ENCODE measurements at regions of chr20 and their contacts with region 1.

Region 1: DNA sequence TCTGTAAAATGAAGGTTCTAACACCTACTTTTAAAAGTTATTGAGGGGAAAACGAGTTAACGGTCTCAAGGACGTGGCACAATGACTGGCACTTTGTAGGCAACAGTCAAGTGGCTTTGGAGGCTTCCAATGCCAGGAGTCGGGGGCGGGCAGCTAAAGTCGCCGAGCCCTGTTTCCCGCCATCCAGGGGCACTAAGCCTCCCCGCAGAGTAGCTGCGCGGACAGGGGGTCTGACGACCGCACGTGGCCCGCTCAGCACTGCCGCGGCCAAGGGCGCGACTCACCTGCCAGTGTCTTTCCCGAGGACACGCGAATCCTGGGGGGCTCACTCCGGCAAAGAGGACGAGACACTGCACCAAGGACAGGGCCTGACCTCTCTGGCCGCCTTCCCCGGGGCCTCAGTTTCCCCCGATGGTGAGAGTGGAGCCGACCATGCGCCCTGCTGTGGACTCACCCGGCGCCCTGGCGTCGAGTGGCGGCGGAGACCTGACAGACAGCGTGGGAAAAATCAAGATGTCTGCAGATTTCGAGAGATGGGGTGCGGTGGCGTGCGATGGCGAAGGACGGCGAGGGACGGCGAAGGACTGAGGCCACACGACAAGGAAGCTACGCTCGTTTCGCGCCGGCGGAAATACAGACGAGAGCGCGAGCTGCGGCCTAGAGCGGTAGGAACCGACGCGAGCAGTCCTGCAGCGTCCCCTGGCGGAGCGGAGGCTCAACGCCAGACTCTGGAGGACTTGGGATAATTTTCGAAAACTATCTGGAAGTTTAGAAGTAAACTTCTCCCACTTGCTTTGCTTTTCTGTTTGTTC is at the start of gene SNHG17:
- DNase-seq: peak; percentile 80 to 97 (median 86)
- ATAC-seq: peak; percentile 85
- H3K4me3 ChIP-seq: peak within 1 kb of the TSS; percentile 85
- H3K4me3 Mint-ChIP-seq: peak within 1 kb of the TSS; percentile 98
- H3K27ac ChIP-seq: peak within 1 kb of the TSS; percentile 78 to 88
- H3K27ac Mint-ChIP-seq: peak within 1 kb of the TSS; percentile 93
- H3K4me1 ChIP-seq: peaks cover 30% of the 10 kb centered on the region
- H3K4me1 Mint-ChIP-seq: peaks cover 52% of the 10 kb centered on the region
- H3K27me3 ChIP-seq: no peaks in the 10 kb centered on the region
- H3K27me3 Mint-ChIP-seq: peaks cover 10% of the 10 kb centered on the region
- CTCF ChIP-seq: peak; percentile 100
- total RNA-seq, gene SNHG17: 94.1 to 99.3 TPM

Region 2: DNA sequence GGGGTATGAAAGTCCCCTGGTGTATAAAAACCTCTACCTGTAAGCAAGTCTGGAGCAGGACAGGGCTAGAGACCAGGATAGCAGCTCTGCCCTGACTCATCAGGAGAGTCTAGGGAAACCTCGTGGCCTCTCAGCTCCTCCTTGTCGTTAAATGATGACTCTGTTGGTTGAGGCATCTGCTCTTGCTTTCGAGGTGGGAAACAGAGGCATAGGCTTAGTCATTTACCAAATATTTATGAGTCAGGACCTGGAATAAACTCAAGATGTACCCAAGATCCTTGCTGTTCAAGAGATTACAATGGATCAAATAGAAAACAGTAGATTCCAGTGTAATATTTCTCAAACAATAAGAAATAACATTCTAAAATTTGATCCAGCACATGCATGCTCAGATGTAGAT is 1139.9 kb before region 1 on chr20:
- CTCF ChIA-PET with region 1: no interaction called
- POLR2A ChIA-PET with region 1: no interaction called
- intact Hi-C with region 1: loop called in 1 of 2 experiments (anchors 10 kb)
- DNase-seq: peak in 2 of 14 experiments; percentile 34 to 54
- ATAC-seq: no peak
- H3K4me3 ChIP-seq: no peak overlapping the region
- H3K4me3 Mint-ChIP-seq: no peak overlapping the region
- H3K27ac ChIP-seq: no peak overlapping the region
- H3K27ac Mint-ChIP-seq: no peak overlapping the region
- H3K4me1 ChIP-seq: peaks cover 20% of the 10 kb centered on the region
- H3K4me1 Mint-ChIP-seq: peaks cover 61% of the 10 kb centered on the region
- H3K27me3 ChIP-seq: no peaks in the 10 kb centered on the region
- H3K27me3 Mint-ChIP-seq: no peaks in the 10 kb centered on the region
- CTCF ChIP-seq: no peak

Region 3: DNA sequence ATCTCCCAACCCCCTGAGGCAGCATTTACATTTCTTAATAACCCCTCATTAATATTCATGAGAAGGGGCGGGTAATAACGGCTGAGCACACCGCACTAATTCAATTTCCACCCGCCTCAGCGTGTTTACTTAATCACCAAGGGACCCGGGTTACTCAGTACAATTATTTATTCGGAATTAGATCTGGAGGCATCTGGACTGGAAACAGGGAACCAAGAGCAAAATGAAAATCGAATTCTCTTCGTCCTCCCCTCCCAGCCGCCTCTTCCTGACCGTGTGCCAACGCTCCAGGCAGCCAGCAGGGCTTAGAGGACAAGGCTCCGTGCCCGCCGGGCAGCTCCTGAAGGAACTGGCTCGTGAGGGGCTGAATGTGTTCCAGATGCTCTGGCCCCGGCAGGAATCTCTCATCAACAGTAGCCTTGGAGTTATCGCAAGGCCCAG is 764.6 kb before region 1 on chr20:
- CTCF ChIA-PET with region 1: no interaction called
- POLR2A ChIA-PET with region 1: no interaction called
- intact Hi-C with region 1: no loop called
- DNase-seq: no peak
- ATAC-seq: no peak
- H3K4me3 ChIP-seq: no peak overlapping the region
- H3K4me3 Mint-ChIP-seq: no peak overlapping the region
- H3K27ac ChIP-seq: no peak overlapping the region
- H3K27ac Mint-ChIP-seq: no peak overlapping the region
- H3K4me1 ChIP-seq: no peaks in the 10 kb centered on the region
- H3K4me1 Mint-ChIP-seq: no peaks in the 10 kb centered on the region
- H3K27me3 ChIP-seq: peaks cover 18 to 44% of the 10 kb centered on the region in 2 experiments
- H3K27me3 Mint-ChIP-seq: peaks cover 59% of the 10 kb centered on the region
- CTCF ChIP-seq: no peak

Region 4: GRCh38 chr20:38033310-38034107 is 401.4 kb before region 1 on chr20 and contains the starts of genes RPRD1B and TTI1:
- CTCF ChIA-PET with region 1: no interaction called
- POLR2A ChIA-PET with region 1: interaction called, 8 read pairs
- intact Hi-C with region 1: loop called in 1 of 2 experiments (anchors 2 kb)
- DNase-seq: peak; percentile 74 to 94 (median 84)
- ATAC-seq: peak; percentile 84
- H3K4me3 ChIP-seq: peak within 1 kb of the TSS; percentile 79
- H3K4me3 Mint-ChIP-seq: peak within 1 kb of the TSS; percentile 99
- H3K27ac ChIP-seq: peak within 1 kb of the TSS; percentile 92 to 98
- H3K27ac Mint-ChIP-seq: peak within 1 kb of the TSS; percentile 100
- H3K4me1 ChIP-seq: peaks cover 38% of the 10 kb centered on the region
- H3K4me1 Mint-ChIP-seq: peaks cover 85% of the 10 kb centered on the region
- H3K27me3 ChIP-seq: no peaks in the 10 kb centered on the region
- H3K27me3 Mint-ChIP-seq: no peaks in the 10 kb centered on the region
- CTCF ChIP-seq: no peak
- total RNA-seq, gene RPRD1B: 54.8 to 55.7 TPM
- total RNA-seq, gene TTI1: 10.6 to 11.4 TPM

Region 5: GRCh38 chr20:38355151-38356012 is 79.6 kb before region 1 on chr20:
- CTCF ChIA-PET with region 1: no interaction called
- POLR2A ChIA-PET with region 1: no interaction called
- intact Hi-C with region 1: no loop called
- DNase-seq: no peak
- ATAC-seq: no peak
- H3K4me3 ChIP-seq: no peak overlapping the region
- H3K4me3 Mint-ChIP-seq: no peak overlapping the region
- H3K27ac ChIP-seq: no peak overlapping the region
- H3K27ac Mint-ChIP-seq: no peak overlapping the region
- H3K4me1 ChIP-seq: no peaks in the 10 kb centered on the region
- H3K4me1 Mint-ChIP-seq: no peaks in the 10 kb centered on the region
- H3K27me3 ChIP-seq: no peaks in the 10 kb centered on the region
- H3K27me3 Mint-ChIP-seq: no peaks in the 10 kb centered on the region
- CTCF ChIP-seq: no peak

Region 6: GRCh38 chr20:38395165-38395564 is 39.8 kb before region 1 on chr20:
- CTCF ChIA-PET with region 1: no interaction called
- POLR2A ChIA-PET with region 1: no interaction called
- intact Hi-C with region 1: no loop called
- DNase-seq: no peak
- ATAC-seq: no peak
- H3K4me3 ChIP-seq: no peak overlapping the region
- H3K4me3 Mint-ChIP-seq: no peak overlapping the region
- H3K27ac ChIP-seq: no peak overlapping the region
- H3K27ac Mint-ChIP-seq: no peak overlapping the region
- H3K4me1 ChIP-seq: no peaks in the 10 kb centered on the region
- H3K4me1 Mint-ChIP-seq: no peaks in the 10 kb centered on the region
- H3K27me3 ChIP-seq: no peaks in the 10 kb centered on the region
- H3K27me3 Mint-ChIP-seq: no peaks in the 10 kb centered on the region
- CTCF ChIP-seq: no peak

Region 7: DNA sequence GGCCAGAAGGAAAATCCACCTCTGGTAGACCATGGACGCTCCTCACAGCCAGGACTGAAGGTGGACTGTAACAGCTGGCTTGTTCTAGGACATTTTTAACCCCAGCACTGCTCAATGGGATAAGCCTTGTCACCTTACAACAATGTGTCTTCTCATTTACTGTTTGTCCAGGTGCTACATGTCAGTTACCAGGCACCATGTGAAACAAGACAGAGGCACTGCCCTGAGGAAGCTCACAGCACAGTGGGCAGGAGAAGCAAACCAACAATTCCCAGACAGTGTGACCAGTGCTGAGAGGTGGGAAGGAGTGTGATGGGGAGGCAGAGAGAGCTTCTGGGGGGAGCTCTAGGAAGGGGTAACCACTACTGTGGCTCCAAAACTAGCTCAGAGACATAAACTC is 10.5 kb before region 1 on chr20:
- CTCF ChIA-PET with region 1: interaction called, 7 read pairs
- POLR2A ChIA-PET with region 1: interaction called, 12 read pairs
- intact Hi-C with region 1: no loop called
- DNase-seq: no peak
- ATAC-seq: no peak
- H3K4me3 ChIP-seq: no peak overlapping the region
- H3K4me3 Mint-ChIP-seq: no peak overlapping the region
- H3K27ac ChIP-seq: no peak overlapping the region
- H3K27ac Mint-ChIP-seq: no peak overlapping the region
- H3K4me1 ChIP-seq: peaks cover 6% of the 10 kb centered on the region
- H3K4me1 Mint-ChIP-seq: peaks cover 36% of the 10 kb centered on the region
- H3K27me3 ChIP-seq: no peaks in the 10 kb centered on the region
- H3K27me3 Mint-ChIP-seq: no peaks in the 10 kb centered on the region
- CTCF ChIP-seq: no peak

Region 8: GRCh38 chr20:38446441-38447209 is 11.7 kb after region 1 on chr20:
- CTCF ChIA-PET with region 1: interaction called, 123 read pairs
- POLR2A ChIA-PET with region 1: interaction called, 149 read pairs
- intact Hi-C with region 1: loop called (anchors 1 kb)
- DNase-seq: peak; percentile 87 to 96 (median 91)
- ATAC-seq: peak; percentile 98
- H3K4me3 ChIP-seq: peak overlapping the region; percentile 89
- H3K4me3 Mint-ChIP-seq: peak overlapping the region; percentile 85
- H3K27ac ChIP-seq: peak overlapping the region; percentile 38 to 75
- H3K27ac Mint-ChIP-seq: peak overlapping the region; percentile 64
- H3K4me1 ChIP-seq: peaks cover 22% of the 10 kb centered on the region
- H3K4me1 Mint-ChIP-seq: peaks cover 25% of the 10 kb centered on the region
- H3K27me3 ChIP-seq: no peaks in the 10 kb centered on the region
- H3K27me3 Mint-ChIP-seq: peaks cover 2% of the 10 kb centered on the region
- CTCF ChIP-seq: peak; percentile 100

Region 9: GRCh38 chr20:38472513-38473372 is 37.8 kb after region 1 on chr20 and contains the start of gene RALGAPB:
- CTCF ChIA-PET with region 1: interaction called, 52 read pairs
- POLR2A ChIA-PET with region 1: interaction called, 56 read pairs
- intact Hi-C with region 1: loop called (anchors 1 kb)
- DNase-seq: peak; percentile 96 to 100 (median 98)
- ATAC-seq: peak; percentile 95
- H3K4me3 ChIP-seq: peak within 1 kb of the TSS; percentile 84
- H3K4me3 Mint-ChIP-seq: peak within 1 kb of the TSS; percentile 89
- H3K27ac ChIP-seq: peak within 1 kb of the TSS; percentile 37 to 81
- H3K27ac Mint-ChIP-seq: peak within 1 kb of the TSS; percentile 88
- H3K4me1 ChIP-seq: peaks cover 27% of the 10 kb centered on the region
- H3K4me1 Mint-ChIP-seq: peaks cover 58% of the 10 kb centered on the region
- H3K27me3 ChIP-seq: peaks cover 0 to 3% of the 10 kb centered on the region in 2 experiments
- H3K27me3 Mint-ChIP-seq: no peaks in the 10 kb centered on the region
- CTCF ChIP-seq: peak; percentile 61
- total RNA-seq, gene RALGAPB: 30.4 to 31.9 TPM

Region 10: GRCh38 chr20:38732981-38733380 is 298.0 kb after region 1 on chr20:
- CTCF ChIA-PET with region 1: no interaction called
- POLR2A ChIA-PET with region 1: no interaction called
- intact Hi-C with region 1: no loop called
- DNase-seq: no peak
- ATAC-seq: no peak
- H3K4me3 ChIP-seq: no peak overlapping the region
- H3K4me3 Mint-ChIP-seq: no peak overlapping the region
- H3K27ac ChIP-seq: no peak overlapping the region
- H3K27ac Mint-ChIP-seq: no peak overlapping the region
- H3K4me1 ChIP-seq: peaks cover 40% of the 10 kb centered on the region
- H3K4me1 Mint-ChIP-seq: peaks cover 35% of the 10 kb centered on the region
- H3K27me3 ChIP-seq: peaks cover 72% of the 10 kb centered on the region in 2 experiments
- H3K27me3 Mint-ChIP-seq: peaks cover 98% of the 10 kb centered on the region
- CTCF ChIP-seq: no peak

Region 11: DNA sequence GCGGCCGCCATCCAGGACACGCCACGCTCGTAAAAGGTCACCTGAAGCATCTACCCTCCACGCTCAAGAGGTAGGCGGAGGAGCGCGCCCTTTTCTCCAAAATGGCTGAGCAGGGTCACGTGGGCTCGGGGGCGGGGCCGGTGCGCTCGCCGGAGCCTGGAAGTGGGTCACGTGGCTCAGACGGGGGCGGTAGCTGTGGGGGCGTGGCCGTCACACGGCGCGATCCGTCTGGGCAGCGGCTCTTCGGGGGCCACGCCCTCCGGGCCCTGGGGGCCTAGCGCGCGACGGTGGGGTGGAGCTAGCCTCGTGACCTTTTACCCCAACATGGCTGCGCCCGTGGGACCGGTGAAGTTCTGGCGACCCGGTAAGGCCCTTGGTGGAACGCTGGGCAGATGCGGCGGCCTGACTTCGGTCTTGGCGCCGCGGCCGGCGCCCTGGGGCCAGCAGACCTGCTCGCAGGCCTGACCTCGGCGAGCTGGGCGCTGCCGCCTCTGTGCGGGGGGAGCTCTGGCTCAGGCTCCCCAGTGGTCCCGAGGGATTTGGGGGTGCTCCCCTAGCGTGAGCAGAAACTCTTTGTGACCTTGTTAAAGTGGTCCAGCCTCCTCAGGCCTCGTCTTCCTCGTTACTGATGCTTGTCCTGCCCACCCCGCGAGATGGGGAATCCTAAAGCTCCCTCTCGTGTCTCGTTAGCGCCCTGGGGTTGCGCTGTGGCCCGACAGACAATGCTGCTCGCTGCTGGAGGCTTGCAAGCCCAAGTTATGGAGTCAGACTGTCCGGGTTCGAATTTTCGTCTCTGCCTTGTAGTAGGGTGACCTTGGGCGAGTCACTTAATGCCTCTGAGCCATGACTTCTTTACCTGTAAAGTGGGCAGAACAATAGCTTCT is 527.3 kb after region 1 on chr20 and contains the start of gene DHX35:
- CTCF ChIA-PET with region 1: no interaction called
- POLR2A ChIA-PET with region 1: interaction called, 11 read pairs
- intact Hi-C with region 1: loop called in 1 of 2 experiments (anchors 5 kb)
- DNase-seq: peak; percentile 96 to 100 (median 98)
- ATAC-seq: peak; percentile 98
- H3K4me3 ChIP-seq: peak within 1 kb of the TSS; percentile 80
- H3K4me3 Mint-ChIP-seq: peak within 1 kb of the TSS; percentile 97
- H3K27ac ChIP-seq: peak within 1 kb of the TSS; percentile 73 to 77
- H3K27ac Mint-ChIP-seq: peak within 1 kb of the TSS; percentile 88
- H3K4me1 ChIP-seq: peaks cover 16% of the 10 kb centered on the region
- H3K4me1 Mint-ChIP-seq: peaks cover 33% of the 10 kb centered on the region
- H3K27me3 ChIP-seq: no peaks in the 10 kb centered on the region
- H3K27me3 Mint-ChIP-seq: no peaks in the 10 kb centered on the region
- CTCF ChIP-seq: peak; percentile 23
- total RNA-seq, gene DHX35: 7.3 to 7.6 TPM

Measured in CD4-positive, alpha-beta T cell (primary cell).